ENCODE measurements at regions of chrX and their contacts with region 1.

Region 1: DNA sequence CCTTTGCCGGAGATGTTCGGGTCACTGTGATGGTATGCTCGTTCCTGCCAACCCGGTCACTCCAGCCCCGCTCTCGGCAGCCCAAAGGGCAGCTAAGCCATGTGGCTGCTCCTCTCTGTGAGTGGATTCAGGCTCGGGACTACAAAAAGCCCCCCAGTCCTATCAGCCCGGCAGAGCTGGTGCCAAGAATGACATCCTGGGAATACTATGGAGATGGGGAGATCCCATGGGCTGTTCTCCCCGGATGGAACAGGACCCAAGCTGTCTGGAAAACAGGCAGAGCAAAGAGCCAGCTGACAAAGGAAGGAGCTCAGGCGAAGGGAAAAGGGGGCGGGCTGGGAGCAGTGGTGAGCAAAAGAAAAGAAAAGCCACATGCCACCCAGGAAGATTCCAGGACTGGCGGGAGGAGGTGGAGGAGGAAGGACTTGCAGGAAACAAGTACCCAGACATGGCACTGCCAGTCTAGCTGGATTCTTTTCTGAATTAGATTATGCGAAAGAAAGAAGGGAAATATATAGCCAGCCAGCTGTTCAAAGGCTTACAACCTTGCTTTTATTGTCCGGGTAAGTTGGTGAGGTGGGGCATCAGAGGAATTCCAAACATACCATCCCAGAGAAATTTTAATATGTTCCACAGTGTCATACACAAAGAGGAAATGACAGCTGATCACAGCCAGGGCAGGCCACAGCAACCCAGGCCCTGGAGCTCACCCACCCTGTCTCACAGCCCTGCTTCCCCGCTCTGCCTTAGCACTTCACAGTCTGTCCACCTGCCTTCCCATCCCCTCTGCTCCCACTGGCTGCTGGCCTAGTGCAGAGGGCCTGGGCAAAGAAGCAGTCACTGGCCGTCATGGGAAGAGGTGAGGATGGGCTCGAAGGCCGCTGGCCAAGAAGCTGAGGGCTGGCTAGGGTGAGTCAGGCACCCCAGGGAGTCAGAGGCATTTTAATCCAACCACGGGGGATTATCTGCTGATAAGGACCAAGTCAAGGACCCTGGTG is 3.4 kb downstream of the NDP start:
- DNase-seq: peak in 1 of 2 donors; percentile 19
- H3K4me3 ChIP-seq: peak overlapping the region in 2 of 3 donors; percentile 21 to 26
- H3K27ac ChIP-seq: peak overlapping the region; percentile 47 to 74
- H3K4me1 ChIP-seq: no peaks in the 10 kb centered on the region
- H3K27me3 ChIP-seq: peaks cover 0 to 72% of the 10 kb centered on the region in 2 donors
- CTCF ChIP-seq: no peak
- POLR2A ChIP-seq: no peak

Region 2: DNA sequence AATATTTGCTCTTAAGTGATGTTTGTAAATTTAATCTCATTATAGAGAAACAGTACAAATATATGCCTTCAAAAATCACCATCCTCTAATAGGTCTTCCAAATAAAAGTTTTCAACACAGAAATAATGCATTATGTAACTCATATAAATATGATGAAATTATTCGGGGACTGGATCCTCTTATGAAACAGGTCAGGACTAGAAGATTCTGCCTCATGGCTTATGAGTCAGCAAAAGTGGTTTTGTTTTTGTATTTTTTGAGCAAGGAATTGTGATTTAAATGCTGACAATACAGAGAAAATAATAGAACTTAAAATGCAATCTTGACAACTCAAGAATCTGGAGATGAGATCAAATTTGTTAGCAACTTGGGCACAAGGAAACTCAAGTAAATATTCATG is 183.0 kb after region 1 on chrX:
- intact Hi-C with region 1: no loop called
- DNase-seq: no peak
- H3K4me3 ChIP-seq: no peak overlapping the region
- H3K27ac ChIP-seq: no peak overlapping the region
- H3K4me1 ChIP-seq: no peaks in the 10 kb centered on the region
- H3K27me3 ChIP-seq: peaks cover 0 to 25% of the 10 kb centered on the region in 2 donors
- CTCF ChIP-seq: no peak
- POLR2A ChIP-seq: no peak

Region 3: DNA sequence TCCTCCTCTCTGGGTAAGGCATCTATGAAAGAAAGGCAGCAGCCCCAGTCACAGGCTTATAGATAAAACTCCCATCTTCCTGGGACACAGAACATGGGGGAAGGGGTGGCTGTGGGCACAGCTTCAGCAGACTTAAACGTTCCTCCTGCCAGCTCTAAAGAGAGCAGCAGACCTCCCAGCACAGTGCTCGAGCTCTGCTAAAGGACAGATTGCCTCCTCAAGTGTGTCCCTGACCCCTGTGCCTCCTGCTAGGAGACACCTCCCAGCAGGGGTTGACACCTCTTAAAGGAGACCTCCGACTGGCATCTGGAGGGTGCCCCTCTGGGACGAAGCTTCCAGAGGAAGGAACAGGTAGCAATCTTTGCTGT is 283.8 kb after region 1 on chrX:
- intact Hi-C with region 1: loop called (anchors 5 kb)
- DNase-seq: no peak
- H3K4me3 ChIP-seq: peak overlapping the region in 2 of 3 donors; percentile 17 to 44
- H3K27ac ChIP-seq: peak overlapping the region in 1 of 2 donors; percentile 38
- H3K4me1 ChIP-seq: peaks cover 0 to 3% of the 10 kb centered on the region in 2 donors
- H3K27me3 ChIP-seq: peaks cover 0 to 22% of the 10 kb centered on the region in 2 donors
- CTCF ChIP-seq: no peak
- POLR2A ChIP-seq: no peak

Measured in breast epithelium (tissue), 4 donors.